ENCODE measurements at regions of chr16 and their contacts with region 1.

Region 1: GRCh38 chr16:66872943-66873684 is 7.2 kb upstream of the PDP2 start:
- DNase-seq: peak; percentile 94
- H3K4me3 ChIP-seq: peak overlapping the region; percentile 57
- H3K27ac ChIP-seq: peak overlapping the region; percentile 82
- H3K27me3 ChIP-seq: no peaks in the 10 kb centered on the region
- CTCF ChIP-seq: peak; percentile 94

Region 2: GRCh38 chr16:66457888-66458287 is 415.2 kb before region 1 on chr16:
- CTCF ChIA-PET with region 1: no interaction called
- POLR2A ChIA-PET with region 1: no interaction called
- DNase-seq: no peak
- H3K4me3 ChIP-seq: no peak overlapping the region
- H3K27ac ChIP-seq: peak overlapping the region; percentile 21
- H3K27me3 ChIP-seq: peaks cover 31% of the 10 kb centered on the region
- CTCF ChIP-seq: no peak

Region 3: DNA sequence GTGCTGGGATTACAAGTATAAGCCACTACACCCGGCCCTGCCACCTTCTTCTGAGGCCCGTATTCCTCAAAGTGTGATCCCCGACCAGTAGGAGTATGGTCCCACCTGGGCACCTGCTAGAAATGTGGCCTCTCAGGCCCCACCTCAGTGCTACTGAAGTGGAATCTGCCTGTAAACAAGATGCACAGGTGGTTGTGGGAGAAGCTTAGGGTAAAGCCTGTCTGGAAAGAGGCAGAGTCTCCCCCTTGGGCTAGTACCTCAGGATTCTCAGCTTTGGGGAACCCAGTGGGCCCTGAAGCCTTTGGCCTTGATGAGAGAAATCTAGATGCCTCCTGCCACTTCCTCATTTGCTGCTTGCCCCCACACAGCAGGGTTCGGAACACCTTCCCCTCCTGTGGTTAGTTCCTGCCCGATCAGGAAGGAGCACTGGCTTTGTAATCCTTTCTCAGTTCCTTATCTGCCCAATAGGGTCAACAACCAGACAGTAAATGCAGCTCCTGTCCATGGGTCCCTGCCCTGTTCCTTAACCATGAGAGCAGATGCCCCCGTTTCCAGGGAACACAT is 348.4 kb before region 1 on chr16:
- CTCF ChIA-PET with region 1: no interaction called
- POLR2A ChIA-PET with region 1: no interaction called
- DNase-seq: no peak
- H3K4me3 ChIP-seq: no peak overlapping the region
- H3K27ac ChIP-seq: no peak overlapping the region
- H3K27me3 ChIP-seq: no peaks in the 10 kb centered on the region
- CTCF ChIP-seq: no peak

Region 4: GRCh38 chr16:66608241-66609138 is 264.6 kb before region 1 on chr16:
- CTCF ChIA-PET with region 1: interaction called, 59 read pairs
- POLR2A ChIA-PET with region 1: no interaction called
- DNase-seq: peak; percentile 71
- H3K4me3 ChIP-seq: no peak overlapping the region; the same call in 1 of the 2 replicates
- H3K27ac ChIP-seq: peak overlapping the region; percentile 57
- H3K27me3 ChIP-seq: no peaks in the 10 kb centered on the region
- CTCF ChIP-seq: peak; percentile 94

Region 5: DNA sequence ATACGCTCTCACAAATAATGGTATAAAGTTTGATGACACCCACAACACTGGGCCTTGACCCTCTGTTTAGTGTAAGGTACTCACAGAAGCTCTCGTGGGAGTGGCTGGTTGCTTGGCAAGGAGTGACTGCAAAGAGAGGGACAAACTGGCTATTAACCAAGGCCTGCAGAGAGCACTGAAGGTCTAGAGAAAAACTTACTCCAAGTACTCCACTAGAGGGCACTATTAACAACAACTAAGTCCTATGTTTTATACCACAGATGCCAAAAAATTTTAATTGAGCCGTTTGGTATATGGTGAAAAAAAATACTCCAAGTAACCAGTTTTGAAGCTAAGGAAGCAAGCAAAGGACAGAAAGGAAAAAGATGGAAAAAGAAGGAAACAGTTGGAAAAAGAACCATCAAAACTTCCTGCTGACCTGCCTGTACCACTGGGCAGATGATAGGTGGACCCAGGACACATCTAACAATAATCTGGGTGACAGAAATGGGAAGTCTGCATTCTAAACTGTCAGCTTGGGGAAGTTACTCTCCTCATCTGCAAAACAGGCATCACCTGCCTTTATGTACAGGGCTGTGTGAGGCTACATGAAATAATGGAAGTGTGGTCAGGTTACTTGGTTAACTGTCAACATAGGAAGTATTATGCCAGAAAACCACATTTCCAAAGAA is 144.9 kb before region 1 on chr16:
- CTCF ChIA-PET with region 1: interaction called, 14 read pairs
- POLR2A ChIA-PET with region 1: no interaction called
- DNase-seq: no peak
- H3K4me3 ChIP-seq: no peak overlapping the region
- H3K27ac ChIP-seq: no peak overlapping the region
- H3K27me3 ChIP-seq: no peaks in the 10 kb centered on the region
- CTCF ChIP-seq: peak; percentile 66

Region 6: GRCh38 chr16:66844342-66845079 is 28.6 kb before region 1 on chr16 and contains the start of gene CA7:
- CTCF ChIA-PET with region 1: interaction called, 24 read pairs
- POLR2A ChIA-PET with region 1: no interaction called
- DNase-seq: no peak
- H3K4me3 ChIP-seq: peak within 1 kb of the TSS; percentile 40
- H3K27ac ChIP-seq: no peak within 1 kb of the TSS
- H3K27me3 ChIP-seq: peaks cover 73% of the 10 kb centered on the region
- CTCF ChIP-seq: no peak
- polyA plus RNA-seq, gene CA7: not detected in 2 replicates

Region 7: GRCh38 chr16:66886346-66886745 is 13.2 kb after region 1 on chr16:
- CTCF ChIA-PET with region 1: interaction called, 21 read pairs
- POLR2A ChIA-PET with region 1: interaction called, 7 read pairs
- DNase-seq: no peak
- H3K4me3 ChIP-seq: no peak overlapping the region
- H3K27ac ChIP-seq: no peak overlapping the region
- H3K27me3 ChIP-seq: no peaks in the 10 kb centered on the region
- CTCF ChIP-seq: no peak